ENCODE measurements at regions of chr10 and their contacts with region 1.

Region 1: GRCh38 chr10:129258283-129258923 is 208.6 kb upstream of the MGMT start:
- DNase-seq: peak in 1 of 2 donors; percentile 17
- ATAC-seq: peak in 7 of 8 donors; percentile 38 to 77 (median 62)
- H3K4me3 ChIP-seq: peak overlapping the region in 1 of 10 donors; percentile 2
- H3K27ac ChIP-seq: peak overlapping the region in 8 of 10 donors; percentile 1 to 70 (median 47)
- H3K4me1 ChIP-seq: peaks cover 0 to 22% (median 6%) of the 10 kb centered on the region in 9 donors
- H3K27me3 ChIP-seq: no peaks in the 10 kb centered on the region
- CTCF ChIP-seq: no peak

Region 2: GRCh38 chr10:129046065-129046681 is 212.2 kb before region 1 on chr10:
- intact Hi-C with region 1: loop called in 1 of 10 experiments (anchors 10 kb)
- DNase-seq: no peak
- ATAC-seq: peak in 6 of 8 donors; percentile 14 to 84 (median 62)
- H3K4me3 ChIP-seq: peak overlapping the region in 8 of 10 donors; percentile 6 to 38 (median 20)
- H3K27ac ChIP-seq: peak overlapping the region in 5 of 10 donors; percentile 39 to 75 (median 49)
- H3K4me1 ChIP-seq: peaks cover 0 to 19% (median 4%) of the 10 kb centered on the region in 9 donors
- H3K27me3 ChIP-seq: peaks cover 0 to 10% (median 0%) of the 10 kb centered on the region in 7 donors
- CTCF ChIP-seq: no peak

Measured in heart right ventricle (tissue), 16 donors.